ENCODE measurements at regions of chr2 and their contacts with region 1.

Region 1: GRCh38 chr2:148952621-148953020 is 77.6 kb downstream of the KIF5C start:
- DNase-seq: no peak
- H3K4me3 ChIP-seq: no peak overlapping the region
- H3K27ac ChIP-seq: no peak overlapping the region
- H3K4me1 ChIP-seq: no peaks in the 10 kb centered on the region
- CTCF ChIP-seq: no peak

Region 2: DNA sequence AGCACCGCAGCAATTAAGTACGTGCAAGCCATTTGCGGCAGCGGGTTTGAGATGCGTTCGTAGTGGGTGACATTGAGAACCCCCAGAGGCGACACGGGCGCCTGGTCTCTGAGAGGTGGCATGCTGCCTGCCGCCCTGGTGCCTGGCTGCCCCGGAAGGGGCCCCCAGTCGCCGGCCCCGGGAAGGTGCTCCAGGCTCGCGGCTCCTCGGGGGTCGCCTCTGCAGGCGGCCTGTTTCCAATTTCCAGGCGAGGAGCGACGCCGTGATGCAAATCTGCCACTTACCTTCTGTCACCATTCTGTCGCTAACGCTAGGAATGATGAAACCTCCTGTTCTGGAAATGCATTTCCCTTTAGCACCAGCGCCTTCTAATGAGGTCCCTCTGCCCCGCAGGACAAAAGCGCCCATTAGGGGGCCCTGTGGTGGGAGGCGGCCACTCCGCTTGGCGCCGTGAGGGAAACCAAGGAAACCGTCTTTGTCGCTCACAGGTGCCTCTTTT is 64.6 kb before region 1 on chr2:
- CTCF ChIA-PET with region 1: interaction called, 10 read pairs
- POLR2A ChIA-PET with region 1: no interaction called
- intact Hi-C with region 1: no loop called
- DNase-seq: no peak
- H3K4me3 ChIP-seq: no peak overlapping the region
- H3K27ac ChIP-seq: no peak overlapping the region
- H3K4me1 ChIP-seq: no peaks in the 10 kb centered on the region
- CTCF ChIP-seq: no peak